Naive thymus-derived CD4-positive, alpha-beta T cell (primary cell): ENCODE measurements at regions of chr6 and their contacts with region 1.

Region 1: DNA sequence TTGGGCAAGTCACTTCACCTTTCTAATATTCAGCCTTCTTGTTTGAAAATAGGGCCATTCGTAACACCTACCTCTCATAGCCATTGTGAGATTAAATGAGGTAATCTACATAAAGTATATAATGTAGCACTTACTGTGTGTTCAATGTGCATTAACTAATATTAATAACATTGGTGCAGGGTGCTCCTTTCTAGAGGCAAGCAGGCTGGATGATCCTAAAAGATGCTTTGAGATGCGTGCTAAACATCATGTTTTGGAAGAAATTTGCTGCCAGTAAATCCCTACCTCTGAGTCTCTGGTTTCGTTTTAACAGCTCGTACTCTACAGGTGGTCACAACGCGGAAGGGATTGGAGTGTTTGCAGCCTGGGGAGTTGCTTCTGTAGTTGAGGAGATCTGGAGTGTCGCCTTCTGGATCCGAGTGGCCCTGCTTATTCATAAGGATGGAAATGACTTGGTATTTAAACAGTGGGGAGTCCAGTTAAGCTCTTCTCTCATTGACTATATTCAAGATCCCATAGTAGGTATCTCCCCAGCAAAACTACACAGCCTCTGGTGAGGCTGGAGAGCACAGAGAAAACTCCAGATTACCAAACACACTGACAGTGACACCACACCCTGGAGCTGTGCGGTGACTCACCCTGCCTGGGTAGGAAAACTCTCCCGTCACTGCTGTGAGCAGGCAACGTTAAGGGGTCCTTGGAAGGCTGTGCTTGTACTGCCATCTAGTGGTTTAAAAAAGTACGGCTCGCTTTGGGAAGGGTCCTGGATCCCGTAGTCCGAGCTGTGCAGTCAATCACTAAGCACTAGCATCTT is 107.9 kb downstream of the MAP3K7 start:
- DNase-seq: peak; percentile 57 to 87 (median 80)
- ATAC-seq: peak; percentile 98
- H3K4me3 ChIP-seq: no peak overlapping the region
- H3K4me3 Mint-ChIP-seq: peak overlapping the region in 4 of 10 donors; percentile 29 to 62 (median 53)
- H3K27ac ChIP-seq: no peak overlapping the region
- H3K27ac Mint-ChIP-seq: peak overlapping the region in 8 of 9 donors; percentile 3 to 89 (median 58)
- H3K4me1 ChIP-seq: peaks cover 6 to 13% of the 10 kb centered on the region in 2 donors
- H3K4me1 Mint-ChIP-seq: peaks cover 9 to 54% (median 26%) of the 10 kb centered on the region in 7 donors
- H3K27me3 ChIP-seq: no peaks in the 10 kb centered on the region
- H3K27me3 Mint-ChIP-seq: no peaks in the 10 kb centered on the region

Region 2: GRCh38 chr6:89371849-89372505 is 1107.0 kb before region 1 on chr6:
- CTCF ChIA-PET with region 1: no interaction called
- POLR2A ChIA-PET with region 1: no interaction called
- intact Hi-C with region 1: loop called (anchors 2 to 5 kb)
- DNase-seq: peak; percentile 55 to 79 (median 68)
- ATAC-seq: peak; percentile 85
- H3K4me3 ChIP-seq: no peak overlapping the region
- H3K4me3 Mint-ChIP-seq: peak overlapping the region in 3 of 10 donors; percentile 13 to 49 (median 29)
- H3K27ac ChIP-seq: no peak overlapping the region
- H3K27ac Mint-ChIP-seq: peak overlapping the region in 5 of 9 donors; percentile 39 to 87 (median 59)
- H3K4me1 ChIP-seq: peaks cover 6 to 8% of the 10 kb centered on the region in 2 donors
- H3K4me1 Mint-ChIP-seq: peaks cover 0 to 42% (median 9%) of the 10 kb centered on the region in 7 donors
- H3K27me3 ChIP-seq: no peaks in the 10 kb centered on the region
- H3K27me3 Mint-ChIP-seq: no peaks in the 10 kb centered on the region

Region 3: GRCh38 chr6:89794324-89794723 is 684.7 kb before region 1 on chr6:
- CTCF ChIA-PET with region 1: no interaction called
- POLR2A ChIA-PET with region 1: no interaction called
- intact Hi-C with region 1: loop called in 1 of 2 experiments (anchors 1 kb)
- DNase-seq: peak in 6 of 9 donors; percentile 45 to 65 (median 54)
- ATAC-seq: peak; percentile 64
- H3K4me3 ChIP-seq: no peak overlapping the region
- H3K4me3 Mint-ChIP-seq: peak overlapping the region; percentile 63 to 86 (median 72)
- H3K27ac ChIP-seq: no peak overlapping the region
- H3K27ac Mint-ChIP-seq: peak overlapping the region; percentile 28 to 80 (median 72)
- H3K4me1 ChIP-seq: peaks cover 16 to 21% of the 10 kb centered on the region in 2 donors
- H3K4me1 Mint-ChIP-seq: peaks cover 25 to 33% (median 28%) of the 10 kb centered on the region in 7 donors
- H3K27me3 ChIP-seq: no peaks in the 10 kb centered on the region
- H3K27me3 Mint-ChIP-seq: no peaks in the 10 kb centered on the region

Region 4: GRCh38 chr6:89940225-89941027 is 538.6 kb before region 1 on chr6:
- CTCF ChIA-PET with region 1: interaction called, 161 read pairs
- POLR2A ChIA-PET with region 1: interaction called, 6 read pairs
- intact Hi-C with region 1: loop called (anchors 1 kb)
- DNase-seq: peak; percentile 22 to 80 (median 70)
- ATAC-seq: peak; percentile 90
- H3K4me3 ChIP-seq: no peak overlapping the region
- H3K4me3 Mint-ChIP-seq: peak overlapping the region in 1 of 10 donors; percentile 48
- H3K27ac ChIP-seq: peak overlapping the region; percentile 53
- H3K27ac Mint-ChIP-seq: peak overlapping the region in 8 of 9 donors; percentile 50 to 91 (median 78)
- H3K4me1 ChIP-seq: peaks cover 0 to 9% of the 10 kb centered on the region in 2 donors
- H3K4me1 Mint-ChIP-seq: peaks cover 6 to 75% (median 39%) of the 10 kb centered on the region in 7 donors
- H3K27me3 ChIP-seq: no peaks in the 10 kb centered on the region
- H3K27me3 Mint-ChIP-seq: no peaks in the 10 kb centered on the region

Region 5: GRCh38 chr6:90110971-90111370 is 368.0 kb before region 1 on chr6:
- CTCF ChIA-PET with region 1: interaction called, 3 read pairs
- POLR2A ChIA-PET with region 1: no interaction called
- intact Hi-C with region 1: loop called in 1 of 2 experiments (anchors 5 kb)
- DNase-seq: peak in 8 of 9 donors; percentile 51 to 78 (median 64)
- ATAC-seq: peak; percentile 84
- H3K4me3 ChIP-seq: no peak overlapping the region
- H3K4me3 Mint-ChIP-seq: peak overlapping the region; percentile 35 to 81 (median 58)
- H3K27ac ChIP-seq: peak overlapping the region; percentile 56
- H3K27ac Mint-ChIP-seq: peak overlapping the region; percentile 73 to 92 (median 82)
- H3K4me1 ChIP-seq: peaks cover 26 to 57% of the 10 kb centered on the region in 2 donors
- H3K4me1 Mint-ChIP-seq: peaks cover 36 to 97% (median 90%) of the 10 kb centered on the region in 7 donors
- H3K27me3 ChIP-seq: no peaks in the 10 kb centered on the region
- H3K27me3 Mint-ChIP-seq: no peaks in the 10 kb centered on the region

Region 6: GRCh38 chr6:90285611-90286381 is 193.2 kb before region 1 on chr6:
- CTCF ChIA-PET with region 1: interaction called, 6 read pairs
- POLR2A ChIA-PET with region 1: interaction called, 7 read pairs
- intact Hi-C with region 1: loop called (anchors 1 kb)
- DNase-seq: peak in 8 of 9 donors; percentile 53 to 87 (median 74)
- ATAC-seq: peak; percentile 68
- H3K4me3 ChIP-seq: peak overlapping the region; percentile 51
- H3K4me3 Mint-ChIP-seq: peak overlapping the region; percentile 83 to 94 (median 88)
- H3K27ac ChIP-seq: peak overlapping the region; percentile 81
- H3K27ac Mint-ChIP-seq: peak overlapping the region; percentile 89 to 100 (median 96)
- H3K4me1 ChIP-seq: peaks cover 21 to 72% of the 10 kb centered on the region in 2 donors
- H3K4me1 Mint-ChIP-seq: peaks cover 54 to 96% (median 92%) of the 10 kb centered on the region in 7 donors
- H3K27me3 ChIP-seq: no peaks in the 10 kb centered on the region
- H3K27me3 Mint-ChIP-seq: peaks cover 0 to 2% (median 0%) of the 10 kb centered on the region in 5 donors